Spleen (tissue), 13 donors: ENCODE measurements at regions of chr4 and their contacts with region 1.

Region 1: GRCh38 chr4:17347445-17347844 is 164.4 kb downstream of the QDPR start:
- DNase-seq: no peak
- H3K4me3 ChIP-seq: no peak overlapping the region
- H3K27ac ChIP-seq: no peak overlapping the region
- H3K4me1 ChIP-seq: no peaks in the 10 kb centered on the region
- H3K27me3 ChIP-seq: no peaks in the 10 kb centered on the region
- CTCF ChIP-seq: peak in 9 of 11 experiments; percentile 15 to 64 (median 42)
- POLR2A ChIP-seq: no peak

Region 2: DNA sequence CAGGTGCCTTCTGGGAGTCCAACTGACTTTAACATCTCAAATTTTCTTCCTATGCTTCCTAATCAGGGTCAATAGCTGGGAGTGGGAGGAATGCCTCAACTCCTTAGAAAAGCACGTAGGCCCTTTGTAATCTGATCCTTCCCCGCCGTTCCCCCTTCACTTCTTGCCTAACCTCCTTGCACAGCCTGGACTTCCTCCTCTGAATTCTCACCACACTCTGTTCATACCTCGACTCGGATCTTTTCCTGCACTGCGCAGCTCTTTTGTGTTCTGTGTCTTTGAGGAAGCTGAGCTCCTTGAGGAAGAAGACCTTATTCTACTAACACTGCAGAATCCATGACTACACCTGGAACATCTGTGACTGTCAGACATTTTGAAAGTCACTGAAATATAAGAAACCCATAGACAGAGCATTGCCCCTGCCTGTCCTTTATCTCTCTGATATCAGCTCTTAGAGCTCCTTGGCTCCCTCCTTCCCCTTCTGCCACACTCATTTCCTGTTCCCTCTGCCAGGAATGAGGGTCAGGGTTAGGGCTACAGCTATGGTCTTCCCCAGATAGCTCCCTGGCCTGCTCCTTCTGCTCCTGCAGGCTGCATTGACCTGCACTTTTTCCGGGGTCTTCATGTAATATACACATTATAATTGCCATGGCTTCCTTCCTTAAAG is 308.8 kb before region 1 on chr4:
- intact Hi-C with region 1: no loop called
- DNase-seq: no peak
- H3K4me3 ChIP-seq: no peak overlapping the region
- H3K27ac ChIP-seq: no peak overlapping the region
- H3K4me1 ChIP-seq: peaks cover 0 to 6% (median 0%) of the 10 kb centered on the region in 6 donors
- H3K27me3 ChIP-seq: no peaks in the 10 kb centered on the region
- CTCF ChIP-seq: no peak
- POLR2A ChIP-seq: no peak

Region 3: DNA sequence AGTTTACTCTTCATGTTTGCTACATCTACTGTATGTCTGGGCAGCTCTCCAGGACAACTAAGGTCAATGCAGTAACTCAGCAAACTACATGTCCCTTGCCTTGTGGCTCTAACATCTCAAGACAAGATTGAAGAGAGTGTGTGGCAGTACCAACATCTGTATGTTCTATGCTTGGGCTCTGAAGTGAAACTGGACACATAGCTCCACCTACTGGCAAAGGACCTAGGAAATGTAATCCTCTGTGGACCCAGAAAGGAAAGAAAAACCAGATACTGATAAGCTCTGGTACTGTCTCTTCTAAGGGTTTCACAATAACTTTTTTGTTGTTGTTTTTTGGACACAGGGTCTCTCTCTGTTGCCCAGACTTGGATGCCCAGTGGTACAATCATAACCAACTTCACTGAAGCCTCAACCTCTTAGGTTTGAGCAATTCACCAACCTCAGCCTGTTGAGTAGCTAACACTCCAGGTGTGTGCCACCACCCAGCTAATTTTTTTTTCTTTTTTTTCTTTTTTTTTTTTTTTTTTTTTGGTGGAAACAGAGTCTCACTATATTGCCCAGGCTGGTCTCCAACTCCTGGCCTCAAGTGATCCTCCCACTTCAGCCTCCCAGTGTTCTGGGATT is 100.3 kb after region 1 on chr4:
- intact Hi-C with region 1: loop called (anchors 10 kb)
- DNase-seq: no peak
- H3K4me3 ChIP-seq: no peak overlapping the region
- H3K27ac ChIP-seq: no peak overlapping the region
- H3K4me1 ChIP-seq: no peaks in the 10 kb centered on the region
- H3K27me3 ChIP-seq: no peaks in the 10 kb centered on the region
- CTCF ChIP-seq: peak in 10 of 11 experiments; percentile 23 to 74 (median 63)
- POLR2A ChIP-seq: no peak